ENCODE measurements at regions of chr21 and their contacts with region 1.

Region 1: GRCh38 chr21:34243562-34243961 is 120.2 kb upstream of the KCNE2 start:
- DNase-seq: peak in 1 of 2 experiments; percentile 15
- H3K4me3 ChIP-seq: no peak overlapping the region
- H3K4me3 Mint-ChIP-seq: no peak overlapping the region
- H3K27ac Mint-ChIP-seq: no peak overlapping the region
- H3K4me1 ChIP-seq: no peaks in the 10 kb centered on the region
- H3K4me1 Mint-ChIP-seq: no peaks in the 10 kb centered on the region
- H3K27me3 ChIP-seq: no peaks in the 10 kb centered on the region
- H3K27me3 Mint-ChIP-seq: no peaks in the 10 kb centered on the region
- CTCF ChIP-seq: peak; percentile 33 to 44

Region 2: DNA sequence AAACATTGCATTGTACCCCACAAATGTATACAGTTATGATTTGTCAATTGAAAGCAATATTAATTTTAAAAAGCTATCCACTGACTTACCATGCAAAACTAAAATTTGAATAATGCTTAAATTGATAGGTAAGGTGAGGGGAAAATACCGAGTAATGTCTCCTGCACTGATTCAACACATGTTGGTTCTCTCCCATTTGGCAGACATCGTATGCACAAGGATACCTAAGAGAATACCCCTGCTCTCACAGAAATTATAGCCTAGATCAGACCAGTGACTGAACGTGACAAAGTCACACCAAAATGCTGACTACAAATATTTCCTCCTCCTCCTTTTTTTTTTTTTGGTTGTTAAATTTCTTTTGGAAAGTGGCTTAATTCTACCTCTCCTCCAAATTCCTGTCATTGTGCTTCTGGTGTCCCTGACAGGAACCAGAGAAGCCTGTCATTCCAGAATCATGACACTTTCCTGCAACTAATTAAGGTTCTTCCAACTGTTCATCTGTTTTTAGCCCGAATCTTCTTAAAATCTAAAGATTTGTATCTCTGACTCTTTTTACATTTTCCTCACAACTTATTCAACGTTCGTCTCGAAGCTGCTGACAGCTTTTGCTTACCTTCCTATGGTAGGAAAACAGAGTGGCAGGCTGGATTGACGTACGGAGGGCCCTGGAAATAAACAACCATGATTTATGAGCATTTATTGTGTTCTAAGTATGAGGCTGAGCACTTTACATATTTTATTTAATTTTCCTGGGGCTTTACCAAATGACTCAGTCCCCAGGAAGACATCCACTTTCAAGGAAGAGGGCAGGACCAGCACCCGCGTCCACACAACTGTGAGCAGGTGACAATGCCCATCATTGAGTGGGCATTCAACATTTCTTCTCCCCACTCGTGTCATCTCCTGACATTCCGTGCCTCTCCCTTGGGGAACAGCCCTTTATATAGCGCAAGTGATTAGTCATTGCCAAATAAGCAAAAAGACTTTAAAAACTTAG is 62.3 kb after region 1 on chr21:
- CTCF ChIA-PET with region 1: no interaction called
- POLR2A ChIA-PET with region 1: no interaction called
- intact Hi-C with region 1: loop called (anchors 10 kb)
- DNase-seq: no peak
- H3K4me3 ChIP-seq: no peak overlapping the region
- H3K4me3 Mint-ChIP-seq: no peak overlapping the region
- H3K27ac Mint-ChIP-seq: no peak overlapping the region
- H3K4me1 ChIP-seq: no peaks in the 10 kb centered on the region
- H3K4me1 Mint-ChIP-seq: no peaks in the 10 kb centered on the region
- H3K27me3 ChIP-seq: no peaks in the 10 kb centered on the region
- H3K27me3 Mint-ChIP-seq: peaks cover 8% of the 10 kb centered on the region
- CTCF ChIP-seq: no peak